ENCODE measurements at regions of chr17 and their contacts with region 1.

Region 1: GRCh38 chr17:51153210-51154072 is at the start of gene NME1:
- DNase-seq: peak; percentile 93 to 99 (median 96)
- ATAC-seq: peak; percentile 90
- H3K4me3 ChIP-seq: peak within 1 kb of the TSS; percentile 94
- H3K4me3 Mint-ChIP-seq: no peak within 1 kb of the TSS
- H3K27ac ChIP-seq: peak within 1 kb of the TSS; percentile 53 to 74
- H3K27ac Mint-ChIP-seq: no peak within 1 kb of the TSS
- H3K4me1 ChIP-seq: peaks cover 20% of the 10 kb centered on the region
- H3K4me1 Mint-ChIP-seq: peaks cover 13% of the 10 kb centered on the region
- H3K27me3 ChIP-seq: no peaks in the 10 kb centered on the region
- H3K27me3 Mint-ChIP-seq: no peaks in the 10 kb centered on the region
- CTCF ChIP-seq: peak; percentile 81
- total RNA-seq, gene NME1: 11.0 to 15.6 TPM

Region 2: GRCh38 chr17:50853015-50853615 is 300.3 kb before region 1 on chr17:
- CTCF ChIA-PET with region 1: interaction called, 8 read pairs
- POLR2A ChIA-PET with region 1: no interaction called
- intact Hi-C with region 1: loop called in 1 of 2 experiments (anchors 2 kb)
- DNase-seq: no peak
- ATAC-seq: no peak
- H3K4me3 ChIP-seq: no peak overlapping the region
- H3K4me3 Mint-ChIP-seq: peak overlapping the region; percentile 81
- H3K27ac ChIP-seq: no peak overlapping the region
- H3K27ac Mint-ChIP-seq: peak overlapping the region; percentile 81
- H3K4me1 ChIP-seq: peaks cover 12% of the 10 kb centered on the region
- H3K4me1 Mint-ChIP-seq: peaks cover 29% of the 10 kb centered on the region
- H3K27me3 ChIP-seq: no peaks in the 10 kb centered on the region
- H3K27me3 Mint-ChIP-seq: no peaks in the 10 kb centered on the region
- CTCF ChIP-seq: no peak

Region 3: GRCh38 chr17:50949989-50950881 is 203.2 kb before region 1 on chr17:
- CTCF ChIA-PET with region 1: no interaction called
- POLR2A ChIA-PET with region 1: no interaction called
- intact Hi-C with region 1: no loop called
- DNase-seq: peak; percentile 32 to 80 (median 54)
- ATAC-seq: peak; percentile 84
- H3K4me3 ChIP-seq: no peak overlapping the region
- H3K4me3 Mint-ChIP-seq: no peak overlapping the region
- H3K27ac ChIP-seq: no peak overlapping the region
- H3K27ac Mint-ChIP-seq: peak overlapping the region; percentile 42
- H3K4me1 ChIP-seq: peaks cover 33% of the 10 kb centered on the region
- H3K4me1 Mint-ChIP-seq: peaks cover 34% of the 10 kb centered on the region
- H3K27me3 ChIP-seq: no peaks in the 10 kb centered on the region
- H3K27me3 Mint-ChIP-seq: no peaks in the 10 kb centered on the region
- CTCF ChIP-seq: peak; percentile 68

Region 4: DNA sequence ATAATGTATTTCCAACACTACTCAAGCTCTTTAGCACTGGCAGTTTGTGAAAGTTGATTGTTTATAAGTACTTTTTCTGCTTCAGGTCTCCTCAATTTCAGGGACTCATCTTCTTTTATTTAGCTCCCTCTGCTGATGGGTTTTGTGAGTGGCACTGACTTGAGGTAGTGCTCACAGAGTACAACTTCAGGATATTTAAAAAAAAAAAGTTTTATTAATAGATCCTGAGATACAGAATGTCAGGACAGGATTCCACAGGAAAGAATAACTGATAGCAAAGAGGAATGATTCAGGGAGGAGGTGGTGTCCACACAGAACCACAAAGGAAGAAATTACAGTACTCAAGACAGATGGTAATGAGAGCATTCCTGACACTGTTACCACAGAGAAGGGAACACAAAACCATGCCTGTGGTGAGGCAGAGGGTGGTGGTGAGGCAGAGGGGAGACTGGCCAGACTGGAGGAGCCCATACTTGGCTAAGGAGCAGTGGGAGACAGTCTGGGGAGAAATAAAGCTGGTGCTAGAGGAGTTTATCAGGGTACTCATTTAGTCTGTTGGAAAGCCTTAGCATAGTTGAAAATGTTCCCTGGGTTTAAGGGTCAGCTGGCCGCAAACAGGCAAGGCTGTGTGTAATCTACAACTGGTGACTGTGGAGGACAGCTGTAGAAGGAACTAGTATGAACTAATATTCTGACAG is 96.5 kb before region 1 on chr17:
- CTCF ChIA-PET with region 1: interaction called, 5 read pairs
- POLR2A ChIA-PET with region 1: interaction called, 5 read pairs
- intact Hi-C with region 1: loop called in 1 of 2 experiments (anchors 10 kb)
- DNase-seq: peak in 9 of 14 experiments; percentile 3 to 62 (median 12)
- ATAC-seq: no peak
- H3K4me3 ChIP-seq: no peak overlapping the region
- H3K4me3 Mint-ChIP-seq: no peak overlapping the region
- H3K27ac ChIP-seq: no peak overlapping the region
- H3K27ac Mint-ChIP-seq: no peak overlapping the region
- H3K4me1 ChIP-seq: no peaks in the 10 kb centered on the region
- H3K4me1 Mint-ChIP-seq: peaks cover 17% of the 10 kb centered on the region
- H3K27me3 ChIP-seq: no peaks in the 10 kb centered on the region
- H3K27me3 Mint-ChIP-seq: no peaks in the 10 kb centered on the region
- CTCF ChIP-seq: peak; percentile 53

Region 5: DNA sequence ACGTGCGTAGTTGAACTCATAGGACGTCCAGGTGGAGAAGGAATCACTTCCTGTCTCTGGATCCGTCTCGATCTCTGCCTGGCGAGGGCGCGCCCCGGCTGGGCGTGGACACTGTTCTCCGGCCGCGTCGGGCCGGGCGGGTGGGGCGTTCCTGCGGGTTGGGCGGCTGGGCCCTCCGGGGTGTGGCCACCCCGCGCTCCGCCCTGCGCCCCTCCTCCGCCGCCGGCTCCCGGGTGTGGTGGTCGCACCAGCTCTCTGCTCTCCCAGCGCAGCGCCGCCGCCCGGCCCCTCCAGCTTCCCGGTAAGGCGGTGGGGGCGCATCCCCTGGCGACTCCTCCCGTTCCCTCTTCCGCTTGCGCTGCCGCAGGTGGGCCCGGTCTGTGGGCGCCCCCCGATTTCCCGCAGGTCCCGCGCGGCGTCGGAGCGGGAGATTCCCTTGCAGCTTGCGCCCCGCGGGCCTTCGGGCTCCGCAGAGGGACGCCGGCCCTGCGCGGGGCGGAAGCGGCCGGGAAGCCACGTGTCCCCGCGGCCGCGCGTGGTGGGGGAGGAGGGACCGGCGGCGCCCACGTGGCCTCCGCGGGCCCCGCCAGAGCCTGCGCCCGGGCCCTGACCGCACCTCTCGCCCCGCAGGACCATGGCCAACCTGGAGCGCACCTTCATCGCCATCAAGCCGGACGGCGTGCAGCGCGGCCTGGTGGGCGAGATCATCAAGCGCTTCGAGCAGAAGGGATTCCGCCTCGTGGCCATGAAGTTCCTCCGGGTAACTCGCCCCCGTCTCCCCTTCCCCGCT is 13.0 kb after region 1 on chr17 and contains the start of gene NME2:
- CTCF ChIA-PET with region 1: interaction called, 10 read pairs
- POLR2A ChIA-PET with region 1: interaction called, 16 read pairs
- intact Hi-C with region 1: no loop called
- DNase-seq: peak; percentile 24 to 83 (median 50)
- ATAC-seq: peak; percentile 69
- H3K4me3 ChIP-seq: peak within 1 kb of the TSS; percentile 76
- H3K4me3 Mint-ChIP-seq: peak within 1 kb of the TSS; percentile 95
- H3K27ac ChIP-seq: peak within 1 kb of the TSS; percentile 50 to 70
- H3K27ac Mint-ChIP-seq: peak within 1 kb of the TSS; percentile 93
- H3K4me1 ChIP-seq: peaks cover 20% of the 10 kb centered on the region
- H3K4me1 Mint-ChIP-seq: peaks cover 20% of the 10 kb centered on the region
- H3K27me3 ChIP-seq: no peaks in the 10 kb centered on the region
- H3K27me3 Mint-ChIP-seq: no peaks in the 10 kb centered on the region
- CTCF ChIP-seq: no peak
- total RNA-seq, gene NME2: 135 to 138 TPM

Region 6: GRCh38 chr17:51508048-51508447 is 354.6 kb after region 1 on chr17:
- CTCF ChIA-PET with region 1: no interaction called
- POLR2A ChIA-PET with region 1: no interaction called
- intact Hi-C with region 1: no loop called
- DNase-seq: no peak
- ATAC-seq: no peak
- H3K4me3 ChIP-seq: no peak overlapping the region
- H3K4me3 Mint-ChIP-seq: no peak overlapping the region
- H3K27ac ChIP-seq: no peak overlapping the region
- H3K27ac Mint-ChIP-seq: no peak overlapping the region
- H3K4me1 ChIP-seq: peaks cover 4% of the 10 kb centered on the region
- H3K4me1 Mint-ChIP-seq: no peaks in the 10 kb centered on the region
- H3K27me3 ChIP-seq: peaks cover 0 to 11% of the 10 kb centered on the region in 2 experiments
- H3K27me3 Mint-ChIP-seq: peaks cover 28% of the 10 kb centered on the region
- CTCF ChIP-seq: no peak

Measured in CD4-positive, alpha-beta T cell (primary cell).